MCF 10A (cell line): ENCODE measurements at regions of chr2 and their contacts with region 1.

Region 1: DNA sequence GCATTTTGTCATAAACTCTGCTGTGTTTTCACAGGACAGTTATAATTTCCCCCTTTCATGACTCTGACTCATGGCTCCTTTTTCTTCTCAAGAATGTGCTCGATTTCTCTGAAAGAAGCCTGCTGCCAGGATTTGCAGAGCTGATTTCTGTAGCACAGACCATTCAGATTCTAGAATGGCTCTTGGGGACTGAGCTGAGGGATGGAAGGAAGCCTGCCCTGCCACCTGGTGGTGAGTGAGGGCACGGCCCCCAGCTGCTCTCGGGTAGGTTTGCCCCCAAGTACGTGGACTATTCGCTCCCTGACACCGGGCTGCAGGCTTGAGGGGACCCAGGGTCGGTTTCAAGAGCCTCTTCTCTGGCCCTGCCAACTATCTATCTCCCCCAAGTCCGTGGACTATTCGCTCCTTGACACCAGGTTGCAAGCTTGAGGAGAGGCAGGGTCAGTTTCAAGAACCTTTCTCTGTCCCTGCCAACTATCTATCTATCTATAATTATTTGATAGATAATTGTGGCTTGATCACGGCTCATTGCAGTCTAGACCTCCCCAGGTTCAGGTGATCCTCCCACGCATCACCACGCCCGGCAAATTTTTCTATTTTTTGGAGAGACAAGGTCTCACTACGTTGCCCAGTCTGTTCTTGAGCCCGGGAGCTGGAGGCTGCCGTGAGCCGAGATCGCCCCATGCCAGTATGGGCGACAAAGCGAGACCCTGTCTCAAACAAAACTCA is 1.4 kb upstream of the SMYD5 start:
- DNase-seq: peak; percentile 68
- H3K4me3 Mint-ChIP-seq: no peak overlapping the region
- H3K27ac Mint-ChIP-seq: no peak overlapping the region
- H3K4me1 Mint-ChIP-seq: peaks cover 27% of the 10 kb centered on the region
- H3K27me3 Mint-ChIP-seq: no peaks in the 10 kb centered on the region
- CTCF ChIP-seq: peak; percentile 84

Region 2: DNA sequence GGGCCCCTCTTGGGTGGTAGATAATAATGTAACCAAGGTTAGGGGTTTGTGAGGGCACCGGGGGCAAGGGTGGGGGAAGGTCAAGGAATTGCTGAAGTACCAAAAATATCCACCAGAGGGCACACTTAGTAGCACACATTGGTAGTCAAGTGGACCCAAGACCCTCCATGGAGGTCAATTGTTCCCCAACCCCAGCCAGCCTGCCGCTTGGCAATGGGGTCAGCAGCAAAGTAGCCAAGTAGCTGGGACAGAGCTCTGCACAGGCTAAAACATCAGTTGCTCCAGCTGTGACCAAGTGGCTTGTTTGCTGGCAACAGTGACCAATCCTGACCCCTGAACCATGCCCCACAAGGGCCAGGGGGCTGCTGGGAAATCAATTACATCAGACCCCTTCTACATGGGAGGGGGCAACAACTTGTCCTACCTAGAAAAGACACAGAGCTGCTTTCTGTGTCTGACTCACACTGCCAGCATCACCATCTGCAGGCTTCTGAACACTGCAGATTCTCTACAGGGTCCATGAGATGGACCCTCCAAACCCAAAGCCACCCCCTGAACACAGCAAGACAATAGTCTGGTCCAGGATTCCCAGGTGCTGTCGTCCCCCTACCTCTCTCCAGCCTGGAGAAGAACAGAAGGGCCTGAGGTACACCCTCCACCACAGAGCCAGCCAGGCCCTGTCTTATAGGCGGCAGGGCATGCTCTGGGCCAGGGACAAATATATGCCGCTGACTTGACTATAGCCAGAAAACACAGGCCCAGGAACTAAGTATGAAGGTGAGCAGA is 219.3 kb before region 1 on chr2:
- CTCF ChIA-PET with region 1: interaction called, 12 read pairs
- POLR2A ChIA-PET with region 1: no interaction called
- intact Hi-C with region 1: no loop called
- DNase-seq: peak; percentile 63
- H3K4me3 Mint-ChIP-seq: no peak overlapping the region
- H3K27ac Mint-ChIP-seq: no peak overlapping the region
- H3K4me1 Mint-ChIP-seq: no peaks in the 10 kb centered on the region
- H3K27me3 Mint-ChIP-seq: no peaks in the 10 kb centered on the region
- CTCF ChIP-seq: peak; percentile 83

Region 3: GRCh38 chr2:73176881-73177644 is 35.5 kb before region 1 on chr2:
- CTCF ChIA-PET with region 1: interaction called, 29 read pairs
- POLR2A ChIA-PET with region 1: interaction called, 9 read pairs
- intact Hi-C with region 1: loop called (anchors 2 kb)
- DNase-seq: peak; percentile 78
- H3K4me3 Mint-ChIP-seq: peak overlapping the region; percentile 86
- H3K27ac Mint-ChIP-seq: no peak overlapping the region
- H3K4me1 Mint-ChIP-seq: peaks cover 9% of the 10 kb centered on the region
- H3K27me3 Mint-ChIP-seq: peaks cover 48% of the 10 kb centered on the region
- CTCF ChIP-seq: peak; percentile 97

Region 4: GRCh38 chr2:73202156-73203054 is 10.2 kb before region 1 on chr2 and contains the start of gene NOTO:
- CTCF ChIA-PET with region 1: interaction called, 14 read pairs
- POLR2A ChIA-PET with region 1: interaction called, 3 read pairs
- intact Hi-C with region 1: no loop called
- DNase-seq: no peak
- H3K4me3 Mint-ChIP-seq: no peak within 1 kb of the TSS
- H3K27ac Mint-ChIP-seq: no peak within 1 kb of the TSS
- H3K4me1 Mint-ChIP-seq: no peaks in the 10 kb centered on the region
- H3K27me3 Mint-ChIP-seq: no peaks in the 10 kb centered on the region
- CTCF ChIP-seq: no peak
- total RNA-seq, gene NOTO: not detected in 2 replicates

Region 5: DNA sequence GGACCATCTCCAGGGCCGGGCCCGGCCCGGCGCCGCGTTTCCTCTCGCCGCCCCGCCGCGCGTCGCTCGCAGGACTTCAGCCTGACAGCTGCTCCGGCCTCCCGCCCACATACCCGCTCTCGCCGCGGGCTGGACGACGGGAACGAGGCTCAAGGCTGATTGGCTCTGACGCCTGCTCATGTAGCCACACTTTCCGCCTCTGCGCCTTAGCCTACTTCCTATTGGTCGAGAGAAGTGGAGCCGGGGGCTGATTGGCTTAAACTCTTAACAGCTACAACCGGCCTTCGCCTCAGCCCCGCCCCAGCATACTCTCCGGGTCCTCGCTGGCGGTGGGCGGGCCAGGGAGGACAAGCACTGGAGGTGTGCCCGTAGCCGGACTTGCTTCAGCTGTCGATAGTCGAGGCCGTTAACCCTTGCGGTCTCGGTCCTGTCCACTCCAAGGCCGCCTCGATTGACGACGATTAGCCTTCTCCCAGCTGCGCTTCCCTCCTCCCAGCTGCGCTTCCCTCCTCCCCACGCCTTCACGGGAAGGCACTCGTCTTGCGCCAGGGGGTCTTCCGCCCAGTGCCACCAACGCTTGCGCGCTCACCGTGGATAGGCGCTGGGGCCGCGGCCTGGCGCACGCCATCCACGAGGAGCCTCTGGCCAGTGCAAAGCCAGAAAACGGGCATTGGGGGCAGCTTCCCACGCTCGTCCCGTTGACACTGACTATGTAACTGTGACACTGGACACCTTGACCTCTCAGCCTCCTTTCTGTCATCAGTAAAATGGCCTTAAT is 20.7 kb after region 1 on chr2 and contains the start of gene PRADC1:
- CTCF ChIA-PET with region 1: interaction called, 36 read pairs
- POLR2A ChIA-PET with region 1: interaction called, 74 read pairs
- intact Hi-C with region 1: no loop called
- DNase-seq: peak; percentile 100
- H3K4me3 Mint-ChIP-seq: peak within 1 kb of the TSS; percentile 75
- H3K27ac Mint-ChIP-seq: peak within 1 kb of the TSS; percentile 98
- H3K4me1 Mint-ChIP-seq: peaks cover 23% of the 10 kb centered on the region
- H3K27me3 Mint-ChIP-seq: no peaks in the 10 kb centered on the region
- CTCF ChIP-seq: no peak
- total RNA-seq, gene PRADC1: 9.5 and 13.5 TPM in 2 replicates